ENCODE measurements at regions of chr20 and their contacts with region 1.

Region 1: GRCh38 chr20:815914-816606 is 17.5 kb upstream of the FAM110A start:
- DNase-seq: peak; percentile 66 to 88
- ATAC-seq: peak; percentile 67 to 86 (median 67)
- H3K4me3 ChIP-seq: no peak overlapping the region
- H3K4me3 Mint-ChIP-seq: no peak overlapping the region
- H3K27ac ChIP-seq: no peak overlapping the region
- H3K27ac Mint-ChIP-seq: no peak overlapping the region
- H3K4me1 ChIP-seq: peaks cover 4% of the 10 kb centered on the region
- H3K4me1 Mint-ChIP-seq: no peaks in the 10 kb centered on the region
- H3K27me3 ChIP-seq: no peaks in the 10 kb centered on the region
- H3K27me3 Mint-ChIP-seq: peaks cover 12 to 24% of the 10 kb centered on the region in 2 donors
- CTCF ChIP-seq: peak; percentile 98

Region 2: GRCh38 chr20:956330-956951 is 140.4 kb after region 1 on chr20:
- intact Hi-C with region 1: loop called (anchors 1 kb)
- DNase-seq: peak; percentile 71 to 86
- ATAC-seq: peak; percentile 72 to 89 (median 85)
- H3K4me3 ChIP-seq: no peak overlapping the region
- H3K4me3 Mint-ChIP-seq: no peak overlapping the region
- H3K27ac ChIP-seq: no peak overlapping the region
- H3K27ac Mint-ChIP-seq: no peak overlapping the region
- H3K4me1 ChIP-seq: peaks cover 12% of the 10 kb centered on the region
- H3K4me1 Mint-ChIP-seq: peaks cover 6 to 16% of the 10 kb centered on the region in 2 donors
- H3K27me3 ChIP-seq: peaks cover 4% of the 10 kb centered on the region
- H3K27me3 Mint-ChIP-seq: peaks cover 19 to 21% of the 10 kb centered on the region in 2 donors
- CTCF ChIP-seq: peak; percentile 99

Region 3: DNA sequence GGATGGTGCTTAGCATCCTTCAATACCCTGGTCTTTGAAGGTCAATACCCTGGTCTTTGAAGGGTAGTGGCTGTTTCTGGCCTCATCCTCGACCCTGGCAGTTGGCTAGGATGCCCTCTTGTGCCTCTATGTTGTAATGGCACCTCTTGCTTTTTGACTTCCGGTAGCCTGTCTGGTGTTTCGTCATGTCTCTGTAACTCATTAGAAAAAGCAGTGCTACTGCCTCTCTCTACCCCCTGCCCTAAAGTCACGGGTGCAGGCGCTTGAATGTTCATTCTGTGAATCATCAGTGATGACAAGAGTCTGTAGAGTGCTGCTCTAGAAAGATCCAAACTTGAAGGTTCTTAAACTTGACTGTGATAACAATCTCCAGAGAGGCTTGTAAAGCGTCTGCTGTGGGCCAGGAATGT is 157.7 kb after region 1 on chr20:
- intact Hi-C with region 1: loop called (anchors 1 kb)
- DNase-seq: peak in 1 of 2 donors; percentile 58
- ATAC-seq: peak; percentile 65 to 97 (median 91)
- H3K4me3 ChIP-seq: no peak overlapping the region
- H3K4me3 Mint-ChIP-seq: no peak overlapping the region
- H3K27ac ChIP-seq: no peak overlapping the region
- H3K27ac Mint-ChIP-seq: no peak overlapping the region
- H3K4me1 ChIP-seq: no peaks in the 10 kb centered on the region
- H3K4me1 Mint-ChIP-seq: peaks cover 0 to 5% of the 10 kb centered on the region in 2 donors
- H3K27me3 ChIP-seq: no peaks in the 10 kb centered on the region
- H3K27me3 Mint-ChIP-seq: peaks cover 0 to 12% of the 10 kb centered on the region in 2 donors
- CTCF ChIP-seq: peak; percentile 36

Region 4: GRCh38 chr20:1108437-1108920 is 292.4 kb after region 1 on chr20:
- intact Hi-C with region 1: loop called (anchors 5 kb)
- DNase-seq: peak; percentile 44 to 70
- ATAC-seq: peak; percentile 65 to 90 (median 82)
- H3K4me3 ChIP-seq: no peak overlapping the region
- H3K4me3 Mint-ChIP-seq: no peak overlapping the region
- H3K27ac ChIP-seq: no peak overlapping the region
- H3K27ac Mint-ChIP-seq: no peak overlapping the region
- H3K4me1 ChIP-seq: peaks cover 4% of the 10 kb centered on the region
- H3K4me1 Mint-ChIP-seq: no peaks in the 10 kb centered on the region
- H3K27me3 ChIP-seq: no peaks in the 10 kb centered on the region
- H3K27me3 Mint-ChIP-seq: peaks cover 0 to 4% of the 10 kb centered on the region in 2 donors
- CTCF ChIP-seq: peak; percentile 73

Region 5: DNA sequence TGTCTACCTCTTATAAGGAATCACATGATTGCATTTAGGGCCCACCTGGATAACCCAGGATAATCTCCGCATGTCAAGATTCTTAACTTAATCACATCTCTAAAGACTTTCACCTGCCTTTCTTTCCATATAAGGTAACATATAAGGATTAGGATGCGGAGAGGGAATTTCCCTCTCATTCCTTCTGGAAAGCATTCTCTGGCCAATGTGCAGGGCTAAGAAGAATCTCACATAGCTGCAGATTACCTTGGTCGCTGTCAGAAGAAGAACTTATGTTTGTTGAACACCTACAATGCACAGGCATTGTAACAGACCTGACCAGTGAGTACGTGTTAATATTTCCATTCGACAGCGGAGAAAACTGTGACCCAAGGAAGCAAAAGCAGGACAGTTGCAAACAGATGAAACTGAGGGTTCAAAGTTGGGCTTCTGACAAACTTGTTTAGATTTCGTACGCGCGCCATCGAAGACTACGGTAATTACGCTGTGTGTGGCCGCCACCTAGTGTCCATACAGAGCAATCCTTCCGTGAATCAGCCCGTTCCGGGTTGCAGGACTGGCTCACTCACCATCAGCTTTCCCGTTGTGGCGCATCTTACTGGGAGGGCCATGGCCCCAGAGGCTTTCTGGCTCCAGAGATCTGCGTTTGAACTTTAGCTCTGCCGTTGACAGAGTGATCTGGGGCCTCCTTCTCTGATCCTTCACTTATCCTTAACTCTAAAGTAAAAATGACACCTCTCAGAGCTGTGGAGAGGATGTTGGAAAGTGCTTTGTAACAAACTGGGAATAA is 396.7 kb after region 1 on chr20:
- intact Hi-C with region 1: loop called (anchors 1 kb)
- DNase-seq: peak; percentile 38 to 85
- ATAC-seq: peak; percentile 90 to 99 (median 94)
- H3K4me3 ChIP-seq: no peak overlapping the region
- H3K4me3 Mint-ChIP-seq: no peak overlapping the region
- H3K27ac ChIP-seq: no peak overlapping the region
- H3K27ac Mint-ChIP-seq: no peak overlapping the region
- H3K4me1 ChIP-seq: peaks cover 4% of the 10 kb centered on the region
- H3K4me1 Mint-ChIP-seq: peaks cover 5 to 8% of the 10 kb centered on the region in 2 donors
- H3K27me3 ChIP-seq: no peaks in the 10 kb centered on the region
- H3K27me3 Mint-ChIP-seq: peaks cover 22 to 36% of the 10 kb centered on the region in 2 donors
- CTCF ChIP-seq: peak; percentile 82

Measured in natural killer cell (primary cell).